ENCODE measurements at regions of chr7 and their contacts with region 1.

Region 1: DNA sequence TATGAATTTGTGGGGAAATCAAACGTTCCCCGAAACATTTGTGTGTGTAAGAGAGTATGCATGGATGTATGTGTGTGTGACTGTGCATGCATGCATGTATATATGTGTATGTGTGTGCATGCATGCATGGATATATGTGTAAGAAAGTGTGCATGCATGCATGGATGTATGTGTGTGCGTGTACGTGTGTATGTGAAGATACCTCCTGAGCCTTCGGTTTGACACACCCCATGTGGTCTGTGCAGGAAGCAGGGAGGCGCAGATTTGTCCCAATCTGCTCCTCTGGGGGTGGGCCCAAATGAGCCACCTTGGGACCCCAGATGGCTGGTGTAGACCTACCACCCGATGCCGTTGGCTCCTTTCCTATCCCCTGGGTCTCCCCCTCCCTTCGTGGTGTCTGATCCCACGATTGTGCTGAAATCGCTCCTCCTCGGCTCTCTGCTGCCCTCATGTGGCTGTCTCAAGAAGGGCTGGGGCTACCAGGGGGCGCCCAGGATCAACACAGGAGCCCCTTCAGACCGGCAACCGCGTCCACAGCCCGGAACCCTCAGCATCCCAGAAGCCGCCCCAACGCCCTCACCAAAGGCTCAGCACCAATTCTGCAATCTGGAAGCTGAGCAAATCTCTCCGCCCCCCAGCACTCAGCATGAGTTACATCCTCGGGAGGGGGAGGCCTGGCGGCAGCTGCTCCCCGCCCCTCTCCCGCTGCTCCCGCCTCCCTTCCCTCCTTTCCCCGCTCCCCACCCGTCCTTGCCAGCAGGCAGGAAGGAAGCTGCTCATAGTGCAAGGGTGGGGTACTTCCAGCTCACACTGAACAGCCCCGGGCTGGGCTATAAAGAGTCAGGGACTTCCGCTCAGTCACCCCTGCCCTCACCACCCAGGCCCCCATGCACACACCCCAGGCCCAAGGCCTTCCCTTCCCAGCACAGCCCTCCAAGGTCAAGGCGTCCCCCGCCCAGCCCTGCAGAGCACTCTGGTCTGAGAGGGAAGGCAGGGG is 2.3 kb upstream of the NOS3 start:
- DNase-seq: peak; percentile 85
- CTCF ChIP-seq: peak; percentile 88

Region 2: GRCh38 chr7:150778738-150779301 is 209.7 kb before region 1 on chr7:
- in situ Hi-C with region 1: loop called (anchors 10 kb)
- DNase-seq: peak; percentile 62
- CTCF ChIP-seq: peak; percentile 86